ENCODE measurements at regions of chr16 and their contacts with region 1.

Region 1: GRCh38 chr16:71564155-71564967 is 12.5 kb downstream of the TAT start:
- DNase-seq: no peak
- ATAC-seq: peak; percentile 15; the same call in 1 of the 2 replicates
- H3K4me3 ChIP-seq: peak overlapping the region; percentile 54 to 83
- H3K27ac ChIP-seq: peak overlapping the region; percentile 51
- H3K4me1 ChIP-seq: no peaks in the 10 kb centered on the region
- H3K27me3 ChIP-seq: no peaks in the 10 kb centered on the region
- CTCF ChIP-seq: no peak

Region 2: GRCh38 chr16:71205482-71206131 is 358.8 kb before region 1 on chr16:
- CTCF ChIA-PET with region 1: no interaction called
- POLR2A ChIA-PET with region 1: no interaction called
- in situ Hi-C with region 1: no loop called
- intact Hi-C with region 1: no loop called
- DNase-seq: no peak
- ATAC-seq: no peak
- H3K4me3 ChIP-seq: no peak overlapping the region
- H3K27ac ChIP-seq: no peak overlapping the region
- H3K4me1 ChIP-seq: no peaks in the 10 kb centered on the region
- H3K27me3 ChIP-seq: no peaks in the 10 kb centered on the region
- CTCF ChIP-seq: no peak

Region 3: DNA sequence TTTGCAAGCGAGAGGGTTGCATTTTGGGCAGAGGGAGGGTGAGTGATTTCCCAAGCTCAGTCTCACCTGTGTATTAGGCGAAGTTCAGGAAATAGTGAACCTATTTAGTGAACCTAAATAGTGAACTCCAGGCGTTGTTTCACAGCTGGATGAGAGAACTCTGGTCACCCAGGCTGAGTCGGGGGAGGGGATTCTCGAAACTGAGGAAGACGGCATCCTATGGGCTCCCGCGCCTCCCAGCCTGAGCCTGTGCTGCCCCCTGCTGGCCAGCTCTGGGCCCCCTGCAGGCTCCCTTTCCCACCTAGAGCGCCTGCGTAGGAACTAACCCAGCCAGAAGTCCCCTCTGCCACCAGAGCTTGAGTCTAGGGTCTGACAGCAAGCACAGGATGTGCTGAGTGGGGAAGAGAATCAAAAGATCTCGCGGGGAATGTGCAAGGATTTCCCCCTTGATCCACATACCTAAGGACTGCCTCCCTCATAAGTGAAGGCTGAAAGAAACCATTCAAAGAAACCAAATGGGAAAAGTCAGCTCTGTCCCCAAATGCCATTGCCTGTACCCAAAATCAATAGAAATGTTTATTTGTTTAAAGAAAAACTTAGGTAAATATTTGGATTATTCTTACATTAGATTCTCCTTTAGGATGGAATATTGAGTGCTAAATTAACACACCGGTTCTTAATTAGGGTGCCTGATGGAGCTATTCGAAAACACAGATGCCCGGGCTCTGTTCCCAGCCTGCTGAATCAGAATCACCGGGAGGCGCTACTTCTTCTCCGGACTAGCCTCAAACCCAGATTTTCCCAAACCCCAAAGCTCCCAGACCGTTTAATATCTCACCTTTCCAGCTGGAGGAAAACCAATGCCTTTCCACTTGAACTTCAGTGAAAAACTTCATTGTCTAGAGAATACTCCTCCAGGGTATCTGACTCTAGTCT is 46.8 kb after region 1 on chr16:
- CTCF ChIA-PET with region 1: interaction called, 17 read pairs
- POLR2A ChIA-PET with region 1: no interaction called
- in situ Hi-C with region 1: no loop called
- intact Hi-C with region 1: loop called (anchors 5 kb)
- DNase-seq: peak; percentile 39
- ATAC-seq: peak; percentile 96
- H3K4me3 ChIP-seq: no peak overlapping the region
- H3K27ac ChIP-seq: no peak overlapping the region
- H3K4me1 ChIP-seq: no peaks in the 10 kb centered on the region
- H3K27me3 ChIP-seq: no peaks in the 10 kb centered on the region; the same call in 1 of the 2 replicates
- CTCF ChIP-seq: peak; percentile 94

Region 4: DNA sequence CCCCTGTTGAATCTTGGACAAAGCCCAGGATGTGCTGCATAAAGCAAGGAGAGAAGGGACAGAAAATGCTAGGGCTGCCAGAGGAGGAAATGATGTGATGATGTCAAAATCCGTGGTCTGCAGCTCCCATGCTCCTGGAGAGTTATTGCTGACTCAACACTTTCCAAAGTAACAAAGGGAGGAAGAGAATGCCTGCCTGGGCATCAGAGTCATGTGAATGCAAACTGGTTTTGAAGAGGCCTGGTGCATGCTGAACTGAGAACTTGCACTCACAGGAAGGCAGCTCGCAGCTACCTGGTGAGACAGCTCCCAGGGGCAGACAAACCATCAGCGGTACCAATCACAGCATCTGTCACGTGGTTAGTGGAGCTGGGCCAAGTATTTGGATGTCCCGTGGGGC is 64.4 kb after region 1 on chr16:
- CTCF ChIA-PET with region 1: interaction called, 5 read pairs
- POLR2A ChIA-PET with region 1: interaction called, 17 read pairs
- in situ Hi-C with region 1: no loop called
- intact Hi-C with region 1: no loop called
- DNase-seq: no peak
- ATAC-seq: no peak
- H3K4me3 ChIP-seq: no peak overlapping the region
- H3K27ac ChIP-seq: no peak overlapping the region
- H3K4me1 ChIP-seq: no peaks in the 10 kb centered on the region
- H3K27me3 ChIP-seq: peaks cover 2% of the 10 kb centered on the region; the same call in 1 of the 2 replicates
- CTCF ChIP-seq: no peak

Region 5: GRCh38 chr16:71889147-71889546 is 324.8 kb after region 1 on chr16:
- CTCF ChIA-PET with region 1: interaction called, 12 read pairs
- POLR2A ChIA-PET with region 1: no interaction called
- in situ Hi-C with region 1: no loop called
- intact Hi-C with region 1: no loop called
- DNase-seq: no peak
- ATAC-seq: no peak
- H3K4me3 ChIP-seq: no peak overlapping the region
- H3K27ac ChIP-seq: no peak overlapping the region
- H3K4me1 ChIP-seq: no peaks in the 10 kb centered on the region
- H3K27me3 ChIP-seq: no peaks in the 10 kb centered on the region
- CTCF ChIP-seq: no peak

Measured in Panc1 (cell line).